CD14-positive monocyte (primary cell): ENCODE measurements at regions of chr5 and their contacts with region 1.

Region 1: GRCh38 chr5:160702934-160703333 is 149.1 kb downstream of the ATP10B start:
- DNase-seq: peak; percentile 79 to 96 (median 88)
- H3K4me3 ChIP-seq: peak overlapping the region in 1 of 3 experiments; percentile 43
- H3K4me3 Mint-ChIP-seq: peak overlapping the region in 1 of 2 donors; percentile 65
- H3K27ac ChIP-seq: peak overlapping the region; percentile 81 to 84
- H3K27ac Mint-ChIP-seq: peak overlapping the region; percentile 82 to 96 (median 94)
- H3K4me1 ChIP-seq: peaks cover 32 to 36% of the 10 kb centered on the region in 2 donors
- H3K4me1 Mint-ChIP-seq: peaks cover 43% of the 10 kb centered on the region
- H3K27me3 ChIP-seq: no peaks in the 10 kb centered on the region
- H3K27me3 Mint-ChIP-seq: peaks cover 0 to 3% (median 2%) of the 10 kb centered on the region in 3 donors
- CTCF ChIP-seq: no peak

Region 2: DNA sequence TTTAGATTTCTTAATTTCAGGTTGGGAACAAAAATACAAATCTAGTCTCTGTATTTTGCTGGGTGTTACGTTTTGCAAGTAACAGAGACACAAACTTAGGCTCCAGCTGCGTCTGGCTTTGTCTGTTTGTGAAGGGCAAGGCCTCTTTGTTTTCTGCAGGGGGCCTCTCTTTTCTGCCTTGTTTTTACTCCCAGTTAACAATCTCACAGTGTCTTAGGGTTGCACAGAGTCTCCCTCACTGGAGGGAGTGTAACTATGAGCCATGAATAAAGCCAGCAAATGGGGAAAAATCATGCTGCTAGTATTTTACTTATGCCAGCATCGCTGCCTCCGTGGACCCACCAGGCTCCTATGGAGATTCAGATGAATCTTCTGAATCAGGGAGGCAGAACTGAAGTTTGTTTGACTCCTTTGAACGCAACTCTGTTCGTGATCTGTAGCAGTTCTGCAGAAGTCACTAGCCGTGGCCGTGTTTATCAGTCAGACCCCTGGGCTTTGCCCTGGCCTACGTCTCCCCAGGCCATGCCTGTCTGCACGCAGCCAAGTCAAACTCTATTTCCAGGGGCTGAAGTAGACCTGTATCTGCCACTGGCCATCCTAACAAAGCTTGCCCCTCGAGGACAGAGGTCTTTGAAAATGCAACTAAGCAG is 71.9 kb after region 1 on chr5:
- intact Hi-C with region 1: no loop called
- DNase-seq: no peak
- H3K4me3 ChIP-seq: no peak overlapping the region
- H3K4me3 Mint-ChIP-seq: no peak overlapping the region
- H3K27ac ChIP-seq: no peak overlapping the region
- H3K27ac Mint-ChIP-seq: no peak overlapping the region
- H3K4me1 ChIP-seq: no peaks in the 10 kb centered on the region
- H3K4me1 Mint-ChIP-seq: peaks cover 2% of the 10 kb centered on the region
- H3K27me3 ChIP-seq: no peaks in the 10 kb centered on the region
- H3K27me3 Mint-ChIP-seq: peaks cover 1 to 7% (median 3%) of the 10 kb centered on the region in 3 donors
- CTCF ChIP-seq: no peak

Region 3: DNA sequence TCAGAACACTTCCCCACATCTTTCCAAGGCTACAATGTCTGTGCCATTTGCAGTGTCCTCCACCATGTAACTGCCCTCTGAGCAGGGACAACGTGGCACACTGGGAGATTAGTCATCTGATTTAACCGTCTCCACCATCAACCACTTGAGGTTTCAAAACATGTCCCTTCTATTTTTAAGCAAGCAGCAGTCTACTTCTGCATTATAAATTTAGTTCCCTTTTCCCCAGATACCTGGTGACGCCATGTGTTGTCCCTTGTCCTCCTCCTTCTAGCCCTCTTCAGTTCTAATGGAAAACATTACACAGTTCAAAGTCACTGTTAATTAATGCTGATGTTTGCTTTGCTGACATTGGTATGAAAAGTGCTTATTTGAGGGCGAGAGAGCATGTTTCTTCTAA is 96.2 kb after region 1 on chr5:
- intact Hi-C with region 1: loop called in 1 of 2 experiments (anchors 10 kb)
- DNase-seq: peak; percentile 77 to 88 (median 80)
- H3K4me3 ChIP-seq: no peak overlapping the region
- H3K4me3 Mint-ChIP-seq: no peak overlapping the region
- H3K27ac ChIP-seq: peak overlapping the region in 1 of 2 donors; percentile 54
- H3K27ac Mint-ChIP-seq: peak overlapping the region; percentile 48 to 87 (median 61)
- H3K4me1 ChIP-seq: peaks cover 14 to 17% of the 10 kb centered on the region in 2 donors
- H3K4me1 Mint-ChIP-seq: peaks cover 31% of the 10 kb centered on the region
- H3K27me3 ChIP-seq: no peaks in the 10 kb centered on the region
- H3K27me3 Mint-ChIP-seq: peaks cover 1 to 4% (median 3%) of the 10 kb centered on the region in 3 donors
- CTCF ChIP-seq: no peak